GM10248 (cell line): ENCODE measurements at regions of chr5 and their contacts with region 1.

Region 1: DNA sequence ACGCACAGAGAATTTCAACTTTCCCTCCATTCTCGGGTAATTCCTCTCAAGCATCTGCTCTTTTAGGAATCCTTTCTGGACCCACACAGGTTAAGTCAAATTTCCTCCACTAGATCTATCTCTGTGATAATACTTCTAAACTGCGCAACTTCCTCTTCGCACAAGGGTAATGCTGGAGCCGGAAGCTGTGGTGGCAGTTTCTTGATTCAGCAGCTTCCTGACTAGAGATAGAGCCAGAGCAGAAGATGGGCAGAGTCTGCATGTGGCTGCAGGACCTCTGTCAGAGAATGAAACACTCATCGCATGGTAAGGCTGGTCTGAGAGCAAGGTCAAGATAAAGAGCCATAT is 11.1 kb upstream of the CDC42SE2 start:
- DNase-seq: peak; percentile 55
- CTCF ChIP-seq: no peak

Region 2: GRCh38 chr5:131239686-131240085 is 13.1 kb before region 1 on chr5:
- CTCF ChIA-PET with region 1: interaction called, 10 read pairs
- POLR2A ChIA-PET with region 1: no interaction called
- DNase-seq: no peak
- CTCF ChIP-seq: no peak